SK-N-SH (cell line): ENCODE measurements at regions of chr11 and their contacts with region 1.

Region 1: GRCh38 chr11:114774599-114775361 is 96.5 kb downstream of the NXPE2 start:
- DNase-seq: peak; percentile 75
- H3K4me3 ChIP-seq: peak overlapping the region in 1 of 2 experiments; percentile 44; a peak in 1 of 4 replicates
- H3K27ac ChIP-seq: no peak overlapping the region; a peak in 1 of 4 replicates
- H3K4me1 ChIP-seq: peaks cover 0 to 27% of the 10 kb centered on the region in 2 experiments; a peak in 2 of 4 replicates
- H3K27me3 ChIP-seq: no peaks in the 10 kb centered on the region
- CTCF ChIP-seq: peak; percentile 65
- EP300 ChIP-seq: peak in 1 of 2 experiments; percentile 29; a peak in 1 of 4 replicates
- RAD21 ChIP-seq: peak; percentile 94

Region 2: DNA sequence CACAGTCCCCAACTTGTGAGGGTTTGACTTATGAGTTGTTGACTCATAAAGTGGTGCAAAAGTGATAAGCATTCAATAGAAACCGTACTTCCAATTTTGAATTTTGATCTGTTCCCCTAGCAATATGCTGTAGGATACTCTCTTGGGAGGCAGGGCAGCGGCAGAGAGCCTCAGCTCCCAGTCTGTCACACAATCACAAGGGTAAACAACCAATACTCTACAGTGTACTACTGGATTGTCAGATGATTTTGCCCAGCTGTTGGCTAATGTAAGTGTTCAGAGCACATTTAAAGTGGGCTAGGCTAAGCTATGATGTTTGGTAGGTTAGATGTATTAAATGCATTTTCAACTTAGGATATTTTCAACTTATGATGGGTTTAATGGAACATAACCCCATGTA is 110.1 kb before region 1 on chr11:
- CTCF ChIA-PET with region 1: no interaction called
- POLR2A ChIA-PET with region 1: no interaction called
- DNase-seq: no peak
- H3K4me3 ChIP-seq: no peak overlapping the region
- H3K27ac ChIP-seq: no peak overlapping the region
- H3K4me1 ChIP-seq: no peaks in the 10 kb centered on the region
- H3K27me3 ChIP-seq: no peaks in the 10 kb centered on the region
- CTCF ChIP-seq: no peak
- EP300 ChIP-seq: no peak
- RAD21 ChIP-seq: no peak

Region 3: GRCh38 chr11:114762408-114762807 is 12.4 kb before region 1 on chr11:
- CTCF ChIA-PET with region 1: interaction called, 20 read pairs
- POLR2A ChIA-PET with region 1: no interaction called
- DNase-seq: peak; percentile 77
- H3K4me3 ChIP-seq: no peak overlapping the region; a peak in 1 of 4 replicates
- H3K27ac ChIP-seq: no peak overlapping the region
- H3K4me1 ChIP-seq: peaks cover 0 to 4% of the 10 kb centered on the region in 2 experiments; a peak in 1 of 4 replicates
- H3K27me3 ChIP-seq: no peaks in the 10 kb centered on the region
- CTCF ChIP-seq: peak; percentile 62
- EP300 ChIP-seq: 0 out of 4 replicates have a peak, but pooled peaks of 1 of the 2 experiments have one; percentile 10
- RAD21 ChIP-seq: peak; percentile 88

Region 4: DNA sequence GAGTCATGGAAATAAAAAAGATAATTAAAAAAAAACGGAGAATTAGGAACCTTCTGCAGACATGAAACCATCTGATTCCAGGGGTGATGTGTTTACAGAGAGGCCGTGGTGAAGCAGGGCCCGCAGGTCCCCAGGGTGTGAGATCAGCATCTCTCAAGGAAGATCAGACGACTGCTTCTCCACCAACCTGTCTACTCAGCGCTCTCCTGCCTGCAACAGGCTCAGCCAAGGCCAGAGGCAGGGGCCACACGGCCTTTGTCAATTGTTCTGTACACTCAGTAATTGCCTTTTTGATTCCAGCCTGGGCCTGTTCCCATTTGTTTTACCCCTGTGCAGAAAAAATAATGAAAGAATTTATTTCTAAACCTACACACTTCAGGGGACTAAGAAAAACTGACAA is 28.1 kb after region 1 on chr11:
- CTCF ChIA-PET with region 1: no interaction called
- POLR2A ChIA-PET with region 1: no interaction called
- DNase-seq: no peak
- H3K4me3 ChIP-seq: no peak overlapping the region
- H3K27ac ChIP-seq: no peak overlapping the region
- H3K4me1 ChIP-seq: peaks cover 0 to 2% of the 10 kb centered on the region in 2 experiments; a peak in 1 of 4 replicates
- H3K27me3 ChIP-seq: no peaks in the 10 kb centered on the region
- CTCF ChIP-seq: no peak
- EP300 ChIP-seq: no peak
- RAD21 ChIP-seq: no peak

Region 5: GRCh38 chr11:114846416-114846791 is 71.6 kb after region 1 on chr11:
- CTCF ChIA-PET with region 1: no interaction called
- POLR2A ChIA-PET with region 1: no interaction called
- DNase-seq: peak; percentile 22
- H3K4me3 ChIP-seq: no peak overlapping the region
- H3K27ac ChIP-seq: no peak overlapping the region; a peak in 1 of 4 replicates
- H3K4me1 ChIP-seq: peaks cover 0 to 6% of the 10 kb centered on the region in 2 experiments; a peak in 1 of 4 replicates
- H3K27me3 ChIP-seq: no peaks in the 10 kb centered on the region
- CTCF ChIP-seq: no peak
- EP300 ChIP-seq: no peak
- RAD21 ChIP-seq: no peak

Region 6: DNA sequence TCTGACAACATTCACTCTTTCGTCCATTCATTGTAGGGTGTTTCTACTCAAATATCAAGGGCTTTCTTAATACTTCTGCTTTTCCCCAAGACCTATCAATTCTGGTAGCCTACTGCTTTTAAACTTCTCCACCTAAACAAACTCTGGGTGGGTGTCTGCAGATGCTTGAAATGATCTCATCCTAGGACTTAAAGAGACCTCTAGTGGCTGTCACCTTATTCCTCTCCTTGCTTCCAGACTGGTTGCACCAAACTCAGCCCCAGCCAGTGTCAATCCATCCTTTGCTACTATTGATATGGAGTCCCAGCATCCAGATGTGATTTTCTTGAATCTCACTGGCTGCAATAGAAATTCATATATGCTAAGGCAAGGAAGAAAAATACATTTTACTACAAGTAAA is 178.3 kb after region 1 on chr11:
- CTCF ChIA-PET with region 1: interaction called, 11 read pairs
- POLR2A ChIA-PET with region 1: no interaction called
- DNase-seq: peak; percentile 44
- H3K4me3 ChIP-seq: no peak overlapping the region
- H3K27ac ChIP-seq: no peak overlapping the region
- H3K4me1 ChIP-seq: no peaks in the 10 kb centered on the region
- H3K27me3 ChIP-seq: no peaks in the 10 kb centered on the region
- CTCF ChIP-seq: no peak
- EP300 ChIP-seq: no peak
- RAD21 ChIP-seq: peak; percentile 65

Region 7: DNA sequence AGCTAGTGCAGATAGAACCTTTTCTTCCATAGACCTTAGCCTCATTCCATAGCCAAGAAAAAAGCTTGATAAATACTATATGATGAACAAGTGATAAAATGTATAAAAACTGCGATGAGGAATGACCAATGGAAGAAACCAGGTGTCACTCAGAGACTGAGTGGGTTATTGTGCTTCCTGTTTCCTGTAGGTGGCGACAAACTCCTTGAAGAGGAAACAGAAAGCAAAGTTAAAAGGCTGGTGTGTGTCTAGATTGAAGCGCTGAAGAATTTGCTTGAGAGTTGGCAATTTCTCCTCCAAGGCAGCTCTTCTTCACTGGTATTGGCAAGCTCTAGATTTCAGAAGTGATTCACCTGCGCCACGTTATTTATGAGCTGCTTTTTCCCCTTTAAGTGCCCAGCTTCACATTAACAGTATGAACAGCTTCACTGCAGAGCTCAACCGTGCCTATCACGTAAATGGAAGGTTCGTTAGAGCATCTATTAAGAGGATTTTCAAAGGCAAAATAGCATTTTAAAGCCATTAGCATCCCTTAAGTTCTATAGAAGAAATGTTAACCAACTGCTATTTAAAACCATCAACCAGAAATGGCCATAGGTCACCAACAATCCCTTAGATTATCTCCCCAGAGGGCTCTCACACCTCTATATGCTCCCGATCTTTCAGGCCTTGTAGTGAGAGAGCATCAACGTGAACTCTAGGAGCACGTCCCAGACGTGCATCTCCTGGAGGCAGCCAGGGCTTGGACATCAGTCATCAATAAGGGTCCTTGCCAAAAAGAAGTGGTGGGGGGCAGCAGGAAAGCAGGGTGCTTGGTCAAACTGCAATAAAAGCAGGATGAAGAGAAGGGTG is 550.0 kb after region 1 on chr11:
- CTCF ChIA-PET with region 1: interaction called, 13 read pairs
- POLR2A ChIA-PET with region 1: no interaction called
- DNase-seq: peak; percentile 33
- H3K4me3 ChIP-seq: no peak overlapping the region; a peak in 1 of 4 replicates
- H3K27ac ChIP-seq: peak overlapping the region in 1 of 2 experiments; percentile 39; a peak in 1 of 4 replicates
- H3K4me1 ChIP-seq: peaks cover 0 to 14% of the 10 kb centered on the region in 2 experiments; a peak in 2 of 4 replicates
- H3K27me3 ChIP-seq: no peaks in the 10 kb centered on the region
- CTCF ChIP-seq: peak; percentile 82
- EP300 ChIP-seq: no peak
- RAD21 ChIP-seq: peak; percentile 90

Region 8: GRCh38 chr11:116691771-116692177 is 1917.0 kb after region 1 on chr11:
- CTCF ChIA-PET with region 1: interaction called, 12 read pairs
- POLR2A ChIA-PET with region 1: no interaction called
- DNase-seq: peak; percentile 91
- H3K4me3 ChIP-seq: peak overlapping the region in 1 of 2 experiments; percentile 24; a peak in 1 of 4 replicates
- H3K27ac ChIP-seq: no peak overlapping the region
- H3K4me1 ChIP-seq: peaks cover 0 to 18% of the 10 kb centered on the region in 2 experiments; a peak in 1 of 4 replicates
- H3K27me3 ChIP-seq: no peaks in the 10 kb centered on the region
- CTCF ChIP-seq: peak; percentile 91
- EP300 ChIP-seq: no peak
- RAD21 ChIP-seq: peak; percentile 94